ENCODE measurements at regions of chr9 and their contacts with region 1.

Region 1: GRCh38 chr9:33167046-33167808 is at the start of gene B4GALT1:
- DNase-seq: peak; percentile 90 to 94 (median 91)
- H3K4me3 ChIP-seq: peak within 1 kb of the TSS; percentile 56 to 99
- H3K4me3 Mint-ChIP-seq: peak within 1 kb of the TSS; percentile 90 to 95 (median 92)
- H3K27ac ChIP-seq: peak within 1 kb of the TSS; percentile 93
- H3K27ac Mint-ChIP-seq: peak within 1 kb of the TSS; percentile 97 to 99 (median 99)
- H3K4me1 ChIP-seq: peaks cover 48% of the 10 kb centered on the region
- H3K4me1 Mint-ChIP-seq: peaks cover 43 to 59% (median 55%) of the 10 kb centered on the region in 4 donors
- H3K27me3 ChIP-seq: no peaks in the 10 kb centered on the region
- H3K27me3 Mint-ChIP-seq: no peaks in the 10 kb centered on the region
- total RNA-seq, gene B4GALT1: 54.1 to 56.0 TPM

Region 2: DNA sequence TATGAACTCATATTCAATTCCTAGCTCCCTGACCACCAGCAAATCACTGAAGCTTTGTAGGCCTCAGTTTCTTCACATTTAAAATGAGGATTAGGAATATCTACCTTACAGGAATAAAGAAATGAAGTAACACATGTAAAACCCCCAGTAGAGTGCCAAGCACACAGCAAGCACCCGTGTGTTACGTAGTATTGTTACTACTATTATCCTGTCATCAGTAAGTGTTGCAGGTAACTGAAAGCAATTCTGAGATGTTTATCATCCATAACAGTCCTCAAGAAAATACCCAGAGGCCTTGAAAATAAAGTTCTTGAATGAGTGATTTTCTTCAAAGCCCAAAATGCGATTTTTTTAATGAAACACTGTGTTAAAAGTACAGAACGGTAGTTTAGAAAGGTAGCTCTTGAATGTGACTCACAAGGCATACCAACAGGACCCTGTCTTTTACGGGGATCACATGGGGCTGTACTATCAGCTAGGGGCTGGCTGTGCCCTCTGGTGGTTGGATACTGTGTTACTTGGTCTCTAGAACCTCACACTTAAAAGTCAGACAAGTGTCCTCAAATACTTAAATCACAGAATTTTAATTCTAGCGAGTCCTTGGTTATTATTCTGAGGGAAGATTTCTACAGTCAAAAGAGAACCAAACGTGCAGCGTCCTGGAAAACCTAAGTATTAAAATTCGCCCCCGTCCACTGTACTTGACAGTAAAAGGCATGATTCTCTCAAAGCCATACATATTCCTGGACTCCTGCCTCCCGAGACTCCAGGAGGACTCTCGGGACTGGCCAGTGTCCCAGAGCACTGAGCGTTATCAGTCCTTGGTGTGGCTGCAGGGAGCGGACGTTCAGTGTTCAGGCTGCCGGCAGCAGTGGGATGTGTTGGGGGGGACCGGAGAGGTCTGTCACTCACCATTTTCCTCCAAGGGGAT is 595.0 kb before region 1 on chr9:
- CTCF ChIA-PET with region 1: no interaction called
- POLR2A ChIA-PET with region 1: no interaction called
- intact Hi-C with region 1: loop called (anchors 5 kb)
- DNase-seq: peak; percentile 74 to 89 (median 80)
- H3K4me3 ChIP-seq: peak overlapping the region; percentile 77 to 95
- H3K4me3 Mint-ChIP-seq: peak overlapping the region; percentile 99 to 100 (median 99)
- H3K27ac ChIP-seq: peak overlapping the region; percentile 83
- H3K27ac Mint-ChIP-seq: peak overlapping the region; percentile 96 to 100 (median 99)
- H3K4me1 ChIP-seq: peaks cover 17% of the 10 kb centered on the region
- H3K4me1 Mint-ChIP-seq: peaks cover 19 to 39% (median 26%) of the 10 kb centered on the region in 4 donors
- H3K27me3 ChIP-seq: no peaks in the 10 kb centered on the region
- H3K27me3 Mint-ChIP-seq: peaks cover 0 to 1% of the 10 kb centered on the region in 2 donors

Region 3: GRCh38 chr9:33076358-33077004 is 90.7 kb before region 1 on chr9 and contains the start of gene SMU1:
- CTCF ChIA-PET with region 1: interaction called, 16 read pairs
- POLR2A ChIA-PET with region 1: interaction called, 32 read pairs
- intact Hi-C with region 1: loop called (anchors 1 kb)
- DNase-seq: peak; percentile 94 to 98 (median 96)
- H3K4me3 ChIP-seq: peak within 1 kb of the TSS; percentile 79 to 92
- H3K4me3 Mint-ChIP-seq: peak within 1 kb of the TSS; percentile 94 to 100 (median 99)
- H3K27ac ChIP-seq: peak within 1 kb of the TSS; percentile 94
- H3K27ac Mint-ChIP-seq: peak within 1 kb of the TSS; percentile 99 to 100 (median 100)
- H3K4me1 ChIP-seq: peaks cover 47% of the 10 kb centered on the region
- H3K4me1 Mint-ChIP-seq: peaks cover 17 to 51% (median 34%) of the 10 kb centered on the region in 4 donors
- H3K27me3 ChIP-seq: no peaks in the 10 kb centered on the region
- H3K27me3 Mint-ChIP-seq: no peaks in the 10 kb centered on the region
- total RNA-seq, gene SMU1: 30.9 to 31.6 TPM

Region 4: DNA sequence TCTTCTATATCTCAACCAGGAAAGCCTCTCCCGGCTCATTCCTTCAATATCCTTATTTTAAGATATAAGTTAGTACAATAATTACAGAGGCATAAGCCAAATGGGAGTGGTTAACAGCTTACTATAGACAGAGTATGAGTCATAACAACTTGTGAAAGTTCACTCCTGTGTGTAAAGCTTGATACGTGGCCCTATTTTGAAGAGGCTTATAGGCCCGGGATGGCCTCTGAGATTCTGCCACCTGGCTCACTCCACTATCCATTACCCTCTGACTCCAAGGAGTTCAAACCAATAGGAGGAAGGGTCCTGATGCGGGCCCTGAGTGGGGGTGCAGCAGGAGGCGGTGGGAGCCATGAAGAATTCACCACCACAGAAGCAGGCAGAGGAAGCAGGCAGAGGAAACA is 36.7 kb before region 1 on chr9:
- CTCF ChIA-PET with region 1: interaction called, 8 read pairs
- POLR2A ChIA-PET with region 1: interaction called, 376 read pairs
- intact Hi-C with region 1: loop called (anchors 5 kb)
- DNase-seq: no peak
- H3K4me3 ChIP-seq: no peak overlapping the region
- H3K4me3 Mint-ChIP-seq: peak overlapping the region in 4 of 8 donors; percentile 25 to 82 (median 53)
- H3K27ac ChIP-seq: no peak overlapping the region
- H3K27ac Mint-ChIP-seq: peak overlapping the region in 6 of 7 donors; percentile 37 to 94 (median 74)
- H3K4me1 ChIP-seq: peaks cover 15% of the 10 kb centered on the region
- H3K4me1 Mint-ChIP-seq: peaks cover 26 to 70% (median 43%) of the 10 kb centered on the region in 4 donors
- H3K27me3 ChIP-seq: no peaks in the 10 kb centered on the region
- H3K27me3 Mint-ChIP-seq: no peaks in the 10 kb centered on the region

Region 5: GRCh38 chr9:33151007-33151557 is 16.1 kb before region 1 on chr9:
- CTCF ChIA-PET with region 1: interaction called, 6 read pairs
- POLR2A ChIA-PET with region 1: interaction called, 376 read pairs
- intact Hi-C with region 1: no loop called
- DNase-seq: no peak
- H3K4me3 ChIP-seq: no peak overlapping the region
- H3K4me3 Mint-ChIP-seq: peak overlapping the region in 5 of 8 donors; percentile 4 to 74 (median 41)
- H3K27ac ChIP-seq: no peak overlapping the region
- H3K27ac Mint-ChIP-seq: peak overlapping the region; percentile 6 to 97 (median 71)
- H3K4me1 ChIP-seq: peaks cover 86% of the 10 kb centered on the region
- H3K4me1 Mint-ChIP-seq: peaks cover 63 to 93% (median 80%) of the 10 kb centered on the region in 4 donors
- H3K27me3 ChIP-seq: no peaks in the 10 kb centered on the region
- H3K27me3 Mint-ChIP-seq: no peaks in the 10 kb centered on the region

Region 6: DNA sequence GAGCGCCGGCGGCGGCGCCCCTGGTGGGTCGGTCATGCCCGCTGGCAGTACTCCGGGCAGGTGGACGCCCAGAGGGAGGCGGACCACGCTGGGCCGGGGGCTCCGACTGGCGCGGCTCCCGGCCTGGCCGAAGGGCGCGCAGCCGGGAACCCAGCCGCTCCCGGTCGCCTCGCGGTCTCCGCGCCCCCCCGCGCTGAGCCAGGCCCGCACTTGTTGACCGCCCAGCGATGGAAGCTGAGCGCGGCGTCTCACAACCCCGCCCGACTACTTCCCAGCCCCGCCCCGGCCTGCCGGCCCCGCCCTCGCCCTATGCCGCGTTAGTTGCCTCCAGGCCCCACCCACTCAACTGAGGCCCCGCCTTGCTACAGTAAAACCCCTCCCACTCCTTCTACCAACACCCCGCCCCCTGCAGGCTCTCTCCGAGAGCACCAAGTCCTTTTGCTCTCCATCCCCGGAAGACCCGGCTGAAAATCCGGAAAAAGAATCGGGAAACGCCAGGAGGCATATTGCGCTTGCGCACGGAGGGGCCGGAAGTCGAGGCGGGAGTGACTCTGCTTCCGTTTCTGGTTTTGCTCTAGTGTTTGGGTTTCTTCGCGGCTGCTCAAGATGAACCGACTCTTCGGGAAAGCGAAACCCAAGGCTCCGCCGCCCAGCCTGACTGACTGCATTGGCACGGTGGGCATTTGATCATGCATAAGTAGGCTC is 97.4 kb after region 1 on chr9 and contains the starts of genes BAG1 and CHMP5:
- CTCF ChIA-PET with region 1: no interaction called
- POLR2A ChIA-PET with region 1: interaction called, 10 read pairs
- intact Hi-C with region 1: loop called (anchors 1 kb)
- DNase-seq: peak; percentile 99 to 100 (median 100)
- H3K4me3 ChIP-seq: peak within 1 kb of the TSS; percentile 71 to 85
- H3K4me3 Mint-ChIP-seq: peak within 1 kb of the TSS; percentile 95 to 100 (median 97)
- H3K27ac ChIP-seq: peak within 1 kb of the TSS; percentile 76
- H3K27ac Mint-ChIP-seq: peak within 1 kb of the TSS; percentile 90 to 99 (median 98)
- H3K4me1 ChIP-seq: peaks cover 38% of the 10 kb centered on the region
- H3K4me1 Mint-ChIP-seq: peaks cover 38 to 53% (median 44%) of the 10 kb centered on the region in 4 donors
- H3K27me3 ChIP-seq: no peaks in the 10 kb centered on the region
- H3K27me3 Mint-ChIP-seq: no peaks in the 10 kb centered on the region
- total RNA-seq, gene BAG1: 53.5 to 56.3 TPM
- total RNA-seq, gene CHMP5: 32.3 to 35.0 TPM